Panc1 (cell line): ENCODE measurements at regions of chr12 and their contacts with region 1.

Region 1: GRCh38 chr12:31989571-31990362 is 30.6 kb downstream of the RESF1 start:
- DNase-seq: no peak
- ATAC-seq: no peak
- H3K4me3 ChIP-seq: no peak overlapping the region
- H3K27ac ChIP-seq: no peak overlapping the region
- H3K4me1 ChIP-seq: no peaks in the 10 kb centered on the region
- H3K27me3 ChIP-seq: no peaks in the 10 kb centered on the region
- CTCF ChIP-seq: no peak

Region 2: GRCh38 chr12:31682136-31682962 is 307.4 kb before region 1 on chr12:
- CTCF ChIA-PET with region 1: no interaction called
- POLR2A ChIA-PET with region 1: no interaction called
- in situ Hi-C with region 1: no loop called
- intact Hi-C with region 1: loop called (anchors 10 kb)
- DNase-seq: peak; percentile 83
- ATAC-seq: peak; percentile 99
- H3K4me3 ChIP-seq: no peak overlapping the region
- H3K27ac ChIP-seq: no peak overlapping the region
- H3K4me1 ChIP-seq: no peaks in the 10 kb centered on the region
- H3K27me3 ChIP-seq: no peaks in the 10 kb centered on the region
- CTCF ChIP-seq: peak; percentile 94

Region 3: GRCh38 chr12:31896514-31897039 is 93.2 kb before region 1 on chr12:
- CTCF ChIA-PET with region 1: no interaction called
- POLR2A ChIA-PET with region 1: no interaction called
- in situ Hi-C with region 1: loop called (anchors 10 kb)
- intact Hi-C with region 1: no loop called
- DNase-seq: no peak
- ATAC-seq: no peak
- H3K4me3 ChIP-seq: no peak overlapping the region
- H3K27ac ChIP-seq: no peak overlapping the region
- H3K4me1 ChIP-seq: no peaks in the 10 kb centered on the region
- H3K27me3 ChIP-seq: no peaks in the 10 kb centered on the region
- CTCF ChIP-seq: no peak

Region 4: GRCh38 chr12:31931796-31932715 is 57.7 kb before region 1 on chr12:
- CTCF ChIA-PET with region 1: no interaction called
- POLR2A ChIA-PET with region 1: no interaction called
- in situ Hi-C with region 1: no loop called
- intact Hi-C with region 1: no loop called
- DNase-seq: no peak
- ATAC-seq: no peak; the same call in 1 of the 2 replicates
- H3K4me3 ChIP-seq: no peak overlapping the region
- H3K27ac ChIP-seq: no peak overlapping the region
- H3K4me1 ChIP-seq: no peaks in the 10 kb centered on the region
- H3K27me3 ChIP-seq: no peaks in the 10 kb centered on the region
- CTCF ChIP-seq: no peak

Region 5: GRCh38 chr12:32266756-32267155 is 277.0 kb after region 1 on chr12:
- CTCF ChIA-PET with region 1: no interaction called
- POLR2A ChIA-PET with region 1: interaction called, 16 read pairs
- in situ Hi-C with region 1: no loop called
- intact Hi-C with region 1: no loop called
- DNase-seq: no peak
- ATAC-seq: no peak
- H3K4me3 ChIP-seq: no peak overlapping the region
- H3K27ac ChIP-seq: no peak overlapping the region
- H3K4me1 ChIP-seq: 0 out of 2 replicates have a peak, but pooled peaks cover 6% of the 10 kb centered on the region
- H3K27me3 ChIP-seq: no peaks in the 10 kb centered on the region
- CTCF ChIP-seq: no peak